ENCODE measurements at regions of chr2 and their contacts with region 1.

Region 1: GRCh38 chr2:127174136-127174535 is 46.0 kb downstream of the CYP27C1 start:
- DNase-seq: no peak
- ATAC-seq: peak; percentile 70
- H3K4me3 ChIP-seq: no peak overlapping the region
- H3K27ac ChIP-seq: no peak overlapping the region
- H3K4me1 ChIP-seq: peaks cover 4% of the 10 kb centered on the region; the same call in 1 of the 2 replicates
- H3K27me3 ChIP-seq: no peaks in the 10 kb centered on the region
- CTCF ChIP-seq: no peak; the same call in 1 of the 2 replicates

Region 2: DNA sequence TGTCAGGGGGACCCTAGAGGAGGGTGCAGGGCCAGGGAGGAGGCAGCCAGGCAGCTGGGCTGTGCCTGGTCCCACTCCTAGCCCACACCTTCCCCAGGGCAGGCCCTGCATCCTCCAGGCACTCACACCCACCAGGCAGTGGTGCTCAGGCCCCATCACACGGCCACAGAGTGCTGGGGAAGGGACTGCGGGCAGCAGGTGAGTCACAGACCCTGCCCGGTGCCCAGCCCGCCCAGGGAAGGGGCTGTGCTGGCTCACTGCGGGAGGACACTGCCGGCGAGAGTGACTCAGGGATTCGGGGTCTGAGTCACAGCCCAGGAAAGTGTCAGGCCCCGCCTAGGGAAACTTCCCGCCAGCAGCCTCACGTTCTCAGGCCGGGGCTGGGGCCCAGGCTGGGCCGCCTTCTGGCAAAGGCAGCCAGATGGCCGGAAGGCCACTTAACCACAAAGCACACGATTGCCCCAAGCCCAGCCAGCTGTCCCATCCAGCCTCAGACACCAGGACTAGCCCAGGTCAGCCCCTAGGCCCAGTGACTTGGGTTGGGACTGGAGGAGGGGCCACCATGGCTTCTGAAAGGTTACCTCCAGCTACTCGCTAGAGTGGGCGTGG is 109.4 kb before region 1 on chr2:
- CTCF ChIA-PET with region 1: no interaction called
- POLR2A ChIA-PET with region 1: no interaction called
- in situ Hi-C with region 1: no loop called
- intact Hi-C with region 1: loop called (anchors 10 kb)
- DNase-seq: peak; percentile 87
- ATAC-seq: peak; percentile 94
- H3K4me3 ChIP-seq: no peak overlapping the region; a peak in 1 of 4 replicates
- H3K27ac ChIP-seq: peak overlapping the region; percentile 88
- H3K4me1 ChIP-seq: peaks cover 25% of the 10 kb centered on the region
- H3K27me3 ChIP-seq: no peaks in the 10 kb centered on the region
- CTCF ChIP-seq: no peak

Region 3: DNA sequence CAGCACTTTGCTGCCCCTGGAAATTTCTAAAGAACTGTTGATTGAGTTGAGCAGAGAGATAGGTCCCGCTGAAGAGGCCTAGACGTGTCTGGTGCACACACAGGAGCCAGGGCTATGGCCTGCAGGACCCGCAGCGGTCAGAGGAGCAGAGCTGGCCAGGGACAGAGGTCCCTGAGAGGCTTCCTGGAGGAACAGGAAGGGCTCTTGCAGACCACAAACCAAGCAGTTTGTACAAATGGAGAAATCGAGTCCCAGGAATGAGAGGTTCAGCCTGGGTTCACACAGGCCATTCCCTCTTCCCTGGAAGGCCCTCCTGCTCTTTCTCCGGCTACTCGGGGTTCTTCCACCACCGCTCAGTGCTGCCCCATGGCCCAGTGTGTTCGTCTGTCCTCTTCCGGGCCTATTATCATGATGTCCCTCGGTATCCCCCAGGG is 66.0 kb before region 1 on chr2:
- CTCF ChIA-PET with region 1: interaction called, 10 read pairs
- POLR2A ChIA-PET with region 1: no interaction called
- in situ Hi-C with region 1: no loop called
- intact Hi-C with region 1: no loop called
- DNase-seq: no peak
- ATAC-seq: no peak
- H3K4me3 ChIP-seq: peak overlapping the region; percentile 61 to 72
- H3K27ac ChIP-seq: peak overlapping the region; percentile 76
- H3K4me1 ChIP-seq: peaks cover 22% of the 10 kb centered on the region
- H3K27me3 ChIP-seq: no peaks in the 10 kb centered on the region; the same call in 1 of the 2 replicates
- CTCF ChIP-seq: no peak